ENCODE measurements at regions of chr7 and their contacts with region 1.

Region 1: GRCh38 chr7:141654551-141654950 is 47.4 kb downstream of the DENND11 start:
- DNase-seq: no peak
- ATAC-seq: peak; percentile 67
- H3K4me3 Mint-ChIP-seq: no peak overlapping the region
- H3K27ac Mint-ChIP-seq: peak overlapping the region; percentile 72
- H3K4me1 Mint-ChIP-seq: peaks cover 15% of the 10 kb centered on the region
- H3K27me3 Mint-ChIP-seq: no peaks in the 10 kb centered on the region
- CTCF ChIP-seq: no peak

Region 2: DNA sequence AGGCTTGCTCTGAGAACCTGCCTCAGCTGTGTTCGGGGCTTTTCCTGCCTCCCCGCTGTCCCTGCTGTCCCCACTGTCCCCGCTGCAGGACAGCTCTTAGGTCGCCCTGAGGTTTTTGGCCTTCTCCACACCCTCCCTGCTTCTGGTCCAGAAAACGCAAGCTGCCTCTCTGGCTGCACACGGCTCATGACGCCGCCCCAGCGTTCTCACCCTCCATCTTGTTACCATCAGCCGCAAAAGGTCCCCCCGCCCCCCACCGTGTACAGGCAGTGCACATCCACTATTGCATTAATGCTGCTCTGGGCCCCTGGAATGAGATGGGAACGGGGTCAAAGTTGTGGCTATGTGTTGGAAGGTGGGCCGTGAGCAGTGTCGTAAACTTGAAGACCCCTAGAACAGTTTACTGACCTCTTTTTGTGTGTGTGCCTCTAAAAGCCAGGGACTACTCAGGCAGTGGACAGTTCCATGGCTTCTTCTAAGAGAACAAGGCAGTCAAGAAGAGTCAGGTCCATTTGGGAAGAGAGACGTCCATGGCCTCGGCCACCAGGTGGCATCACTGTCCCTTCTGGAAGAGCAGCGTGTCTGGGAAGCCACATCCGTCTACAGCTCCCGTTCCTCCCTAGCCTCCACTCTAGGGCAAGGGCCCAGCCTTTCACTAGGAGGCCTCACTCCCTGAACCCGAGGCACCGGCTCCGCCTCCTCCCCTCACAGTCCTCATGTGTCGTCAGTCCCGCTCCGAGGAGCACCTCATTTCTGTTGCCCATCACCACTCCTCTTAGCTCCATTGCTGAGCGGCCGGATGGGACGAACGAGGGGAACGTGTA is 1136.8 kb before region 1 on chr7:
- CTCF ChIA-PET with region 1: no interaction called
- POLR2A ChIA-PET with region 1: no interaction called
- intact Hi-C with region 1: loop called (anchors 1 kb)
- DNase-seq: peak; percentile 57
- ATAC-seq: peak; percentile 67
- H3K4me3 Mint-ChIP-seq: peak overlapping the region; percentile 42
- H3K27ac Mint-ChIP-seq: no peak overlapping the region
- H3K4me1 Mint-ChIP-seq: peaks cover 4% of the 10 kb centered on the region
- H3K27me3 Mint-ChIP-seq: peaks cover 11% of the 10 kb centered on the region
- CTCF ChIP-seq: no peak

Region 3: GRCh38 chr7:140924019-140924820 is 730.3 kb before region 1 on chr7:
- CTCF ChIA-PET with region 1: no interaction called
- POLR2A ChIA-PET with region 1: no interaction called
- intact Hi-C with region 1: loop called (anchors 10 kb)
- DNase-seq: peak; percentile 71
- ATAC-seq: peak; percentile 75
- H3K4me3 Mint-ChIP-seq: no peak overlapping the region
- H3K27ac Mint-ChIP-seq: no peak overlapping the region
- H3K4me1 Mint-ChIP-seq: peaks cover 28% of the 10 kb centered on the region
- H3K27me3 Mint-ChIP-seq: no peaks in the 10 kb centered on the region
- CTCF ChIP-seq: no peak

Region 4: GRCh38 chr7:141198184-141198958 is 456.2 kb before region 1 on chr7:
- CTCF ChIA-PET with region 1: no interaction called
- POLR2A ChIA-PET with region 1: no interaction called
- intact Hi-C with region 1: loop called (anchors 10 kb)
- DNase-seq: no peak
- ATAC-seq: no peak
- H3K4me3 Mint-ChIP-seq: no peak overlapping the region
- H3K27ac Mint-ChIP-seq: no peak overlapping the region
- H3K4me1 Mint-ChIP-seq: peaks cover 14% of the 10 kb centered on the region
- H3K27me3 Mint-ChIP-seq: peaks cover 9% of the 10 kb centered on the region
- CTCF ChIP-seq: no peak

Region 5: GRCh38 chr7:141497391-141497790 is 157.2 kb before region 1 on chr7:
- CTCF ChIA-PET with region 1: no interaction called
- POLR2A ChIA-PET with region 1: no interaction called
- intact Hi-C with region 1: no loop called
- DNase-seq: no peak
- ATAC-seq: no peak
- H3K4me3 Mint-ChIP-seq: no peak overlapping the region
- H3K27ac Mint-ChIP-seq: no peak overlapping the region
- H3K4me1 Mint-ChIP-seq: no peaks in the 10 kb centered on the region
- H3K27me3 Mint-ChIP-seq: peaks cover 4% of the 10 kb centered on the region
- CTCF ChIP-seq: no peak

Region 6: DNA sequence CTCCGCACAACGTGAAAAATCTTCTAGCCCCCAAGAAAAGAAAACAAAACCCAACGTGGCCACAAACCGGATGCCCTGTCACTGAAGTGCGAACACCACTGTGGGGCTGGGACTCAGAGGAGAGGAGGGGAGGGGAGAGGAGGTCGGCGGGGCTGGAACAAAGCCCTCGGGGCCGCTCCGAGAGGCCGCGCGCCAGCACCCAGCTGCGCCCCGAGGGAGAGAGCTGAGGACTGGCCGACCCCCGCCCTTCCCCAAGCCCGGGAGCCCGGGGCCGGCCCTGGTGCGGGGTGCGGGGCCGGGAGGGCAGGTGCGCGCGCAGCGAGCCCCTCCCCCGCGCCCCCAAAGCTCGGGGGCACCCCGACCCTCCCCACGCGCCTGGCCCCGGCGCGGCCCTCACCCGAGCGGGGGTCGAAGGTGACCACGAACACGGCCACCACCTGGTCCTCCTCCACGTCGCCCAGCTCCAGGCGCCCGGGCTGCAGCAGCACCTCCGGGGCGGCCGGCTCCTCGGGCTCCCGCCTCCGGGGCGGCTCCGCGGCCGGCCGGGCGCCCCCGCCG is 47.0 kb after region 1 on chr7:
- CTCF ChIA-PET with region 1: interaction called, 9 read pairs
- POLR2A ChIA-PET with region 1: interaction called, 4 read pairs
- intact Hi-C with region 1: loop called (anchors 1 kb)
- DNase-seq: peak; percentile 69
- ATAC-seq: peak; percentile 89
- H3K4me3 Mint-ChIP-seq: peak overlapping the region; percentile 85
- H3K27ac Mint-ChIP-seq: peak overlapping the region; percentile 75
- H3K4me1 Mint-ChIP-seq: peaks cover 50% of the 10 kb centered on the region
- H3K27me3 Mint-ChIP-seq: no peaks in the 10 kb centered on the region
- CTCF ChIP-seq: no peak

Region 7: DNA sequence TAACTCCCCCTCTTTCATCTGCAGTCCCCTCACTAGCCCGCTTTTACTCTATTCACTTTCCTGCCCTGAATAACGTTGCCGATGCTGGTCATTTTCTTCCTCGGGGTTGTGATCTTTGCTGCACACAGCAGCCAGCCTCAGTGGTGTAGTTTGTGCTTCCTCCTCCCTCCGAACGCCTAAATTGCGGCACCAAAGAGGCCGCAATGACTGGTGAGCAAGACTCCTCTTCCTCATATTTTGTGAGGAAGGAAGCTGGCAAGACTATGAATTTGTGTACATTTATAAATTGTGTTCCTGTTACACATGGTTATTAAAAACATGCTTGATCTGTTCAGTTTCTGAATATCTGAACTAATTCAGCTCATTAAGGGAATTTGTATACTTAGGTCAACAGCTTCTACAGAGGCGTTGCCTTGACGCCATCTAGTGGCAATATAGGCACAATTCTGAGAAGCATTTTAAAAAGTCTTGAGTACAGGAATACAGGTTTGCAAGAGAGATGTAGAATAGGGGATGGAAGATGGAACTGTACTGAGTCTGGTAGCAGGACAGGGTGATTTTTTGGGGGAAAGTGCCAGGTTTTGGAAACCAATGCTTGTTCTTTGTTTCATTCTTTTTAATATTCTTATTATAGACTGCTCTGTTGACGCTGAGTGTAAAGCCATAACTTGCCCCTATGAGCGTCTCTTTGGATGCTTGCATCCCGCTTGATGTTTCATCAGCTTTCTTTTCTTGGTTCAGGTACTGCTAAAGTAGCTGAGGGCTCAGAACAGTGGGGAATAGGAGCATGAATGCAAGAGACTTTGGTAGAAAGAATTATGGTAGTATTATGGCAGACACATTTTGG is 131.4 kb after region 1 on chr7:
- CTCF ChIA-PET with region 1: interaction called, 36 read pairs
- POLR2A ChIA-PET with region 1: no interaction called
- intact Hi-C with region 1: loop called (anchors 1 kb)
- DNase-seq: no peak
- ATAC-seq: peak; percentile 40
- H3K4me3 Mint-ChIP-seq: no peak overlapping the region
- H3K27ac Mint-ChIP-seq: no peak overlapping the region
- H3K4me1 Mint-ChIP-seq: no peaks in the 10 kb centered on the region
- H3K27me3 Mint-ChIP-seq: no peaks in the 10 kb centered on the region
- CTCF ChIP-seq: peak; percentile 70